IMR-90 (cell line): ENCODE measurements at regions of chr7 and their contacts with region 1.

Region 1: DNA sequence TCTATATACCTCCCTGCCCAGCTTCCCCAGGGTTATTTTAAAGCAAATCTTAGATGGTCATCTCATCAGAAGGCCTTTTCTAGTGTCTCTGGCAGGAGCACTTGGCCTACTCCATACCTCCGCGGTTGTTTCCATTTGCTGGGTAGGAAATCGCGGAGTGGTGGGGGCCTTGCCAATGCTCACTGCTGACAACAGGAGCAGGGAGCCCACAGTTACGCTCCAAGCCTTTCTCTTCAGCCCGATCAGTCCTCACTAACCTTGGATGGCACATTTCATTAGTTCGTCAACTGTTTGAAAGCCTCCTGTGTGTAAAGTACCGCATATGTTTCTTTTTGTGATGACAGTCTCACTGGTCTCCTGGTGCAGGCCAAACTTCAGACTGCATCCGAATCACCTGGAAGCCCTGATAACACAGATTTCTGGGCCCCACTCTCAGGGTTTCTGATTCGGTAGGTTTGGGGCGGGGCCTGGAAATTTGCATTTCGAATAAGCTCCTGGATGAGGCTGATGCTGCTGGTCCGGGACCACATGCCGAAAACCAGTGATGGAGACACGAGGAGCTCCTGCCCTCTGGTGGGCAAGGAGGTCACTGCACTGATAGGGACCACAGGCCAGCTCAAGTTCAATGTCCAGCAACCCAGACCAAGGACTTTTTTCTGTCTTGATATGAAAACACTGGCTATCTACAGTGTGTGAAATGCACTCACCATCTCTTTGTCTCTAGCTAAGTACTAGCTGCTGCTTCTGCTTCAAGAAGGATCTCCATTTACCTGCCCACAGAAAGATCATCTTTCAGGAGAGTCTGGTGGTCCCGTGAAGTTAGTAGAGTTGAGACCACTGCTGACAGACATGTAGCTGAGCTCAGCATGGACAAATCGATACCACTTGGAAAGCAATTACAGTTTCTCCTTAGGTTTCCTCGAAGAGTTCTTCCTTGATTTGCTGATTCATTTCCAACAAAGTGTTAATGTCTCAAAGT is 14.0 kb downstream of the LRGUK start:
- DNase-seq: peak; percentile 51
- ATAC-seq: peak; percentile 100
- H3K4me3 ChIP-seq: no peak overlapping the region
- H3K27ac ChIP-seq: no peak overlapping the region
- H3K4me1 ChIP-seq: no peaks in the 10 kb centered on the region
- H3K27me3 ChIP-seq: no peaks in the 10 kb centered on the region; the same call in 1 of the 2 replicates
- CTCF ChIP-seq: peak; percentile 76
- POLR2A ChIP-seq: no peak
- RAD21 ChIP-seq: peak; percentile 74

Region 2: GRCh38 chr7:133950855-133951254 is 190.3 kb before region 1 on chr7:
- CTCF ChIA-PET with region 1: no interaction called
- POLR2A ChIA-PET with region 1: no interaction called
- dilution Hi-C with region 1: no loop called
- in situ Hi-C with region 1: no loop called
- intact Hi-C with region 1: no loop called
- DNase-seq: no peak
- ATAC-seq: no peak
- H3K4me3 ChIP-seq: no peak overlapping the region
- H3K27ac ChIP-seq: no peak overlapping the region
- H3K4me1 ChIP-seq: no peaks in the 10 kb centered on the region
- H3K27me3 ChIP-seq: no peaks in the 10 kb centered on the region
- CTCF ChIP-seq: no peak
- POLR2A ChIP-seq: no peak
- RAD21 ChIP-seq: no peak

Region 3: GRCh38 chr7:134126966-134127848 is 14.0 kb before region 1 on chr7 and contains the start of gene LRGUK:
- CTCF ChIA-PET with region 1: interaction called, 14 read pairs
- POLR2A ChIA-PET with region 1: no interaction called
- dilution Hi-C with region 1: no loop called
- in situ Hi-C with region 1: no loop called
- intact Hi-C with region 1: no loop called
- DNase-seq: peak; percentile 72
- ATAC-seq: peak; percentile 100
- H3K4me3 ChIP-seq: peak within 1 kb of the TSS; percentile 86
- H3K27ac ChIP-seq: no peak within 1 kb of the TSS
- H3K4me1 ChIP-seq: no peaks in the 10 kb centered on the region
- H3K27me3 ChIP-seq: peaks cover 7% of the 10 kb centered on the region
- CTCF ChIP-seq: no peak
- POLR2A ChIP-seq: no peak
- RAD21 ChIP-seq: no peak
- total RNA-seq, gene LRGUK: under 0.01 TPM in 1 of 2 replicates, not detected in the other

Region 4: GRCh38 chr7:134154581-134155130 is 13.5 kb after region 1 on chr7:
- CTCF ChIA-PET with region 1: interaction called, 20 read pairs
- POLR2A ChIA-PET with region 1: no interaction called
- dilution Hi-C with region 1: no loop called
- in situ Hi-C with region 1: no loop called
- intact Hi-C with region 1: no loop called
- DNase-seq: no peak
- ATAC-seq: no peak
- H3K4me3 ChIP-seq: no peak overlapping the region
- H3K27ac ChIP-seq: no peak overlapping the region
- H3K4me1 ChIP-seq: no peaks in the 10 kb centered on the region
- H3K27me3 ChIP-seq: no peaks in the 10 kb centered on the region
- CTCF ChIP-seq: no peak
- POLR2A ChIP-seq: no peak
- RAD21 ChIP-seq: no peak

Region 5: GRCh38 chr7:134327896-134328295 is 186.7 kb after region 1 on chr7:
- CTCF ChIA-PET with region 1: no interaction called
- POLR2A ChIA-PET with region 1: no interaction called
- dilution Hi-C with region 1: no loop called
- in situ Hi-C with region 1: no loop called
- intact Hi-C with region 1: loop called (anchors 10 kb)
- DNase-seq: peak; percentile 56
- ATAC-seq: peak; percentile 68
- H3K4me3 ChIP-seq: no peak overlapping the region
- H3K27ac ChIP-seq: no peak overlapping the region
- H3K4me1 ChIP-seq: no peaks in the 10 kb centered on the region
- H3K27me3 ChIP-seq: peaks cover 8% of the 10 kb centered on the region
- CTCF ChIP-seq: peak; percentile 56
- POLR2A ChIP-seq: no peak
- RAD21 ChIP-seq: peak; percentile 69

Region 6: DNA sequence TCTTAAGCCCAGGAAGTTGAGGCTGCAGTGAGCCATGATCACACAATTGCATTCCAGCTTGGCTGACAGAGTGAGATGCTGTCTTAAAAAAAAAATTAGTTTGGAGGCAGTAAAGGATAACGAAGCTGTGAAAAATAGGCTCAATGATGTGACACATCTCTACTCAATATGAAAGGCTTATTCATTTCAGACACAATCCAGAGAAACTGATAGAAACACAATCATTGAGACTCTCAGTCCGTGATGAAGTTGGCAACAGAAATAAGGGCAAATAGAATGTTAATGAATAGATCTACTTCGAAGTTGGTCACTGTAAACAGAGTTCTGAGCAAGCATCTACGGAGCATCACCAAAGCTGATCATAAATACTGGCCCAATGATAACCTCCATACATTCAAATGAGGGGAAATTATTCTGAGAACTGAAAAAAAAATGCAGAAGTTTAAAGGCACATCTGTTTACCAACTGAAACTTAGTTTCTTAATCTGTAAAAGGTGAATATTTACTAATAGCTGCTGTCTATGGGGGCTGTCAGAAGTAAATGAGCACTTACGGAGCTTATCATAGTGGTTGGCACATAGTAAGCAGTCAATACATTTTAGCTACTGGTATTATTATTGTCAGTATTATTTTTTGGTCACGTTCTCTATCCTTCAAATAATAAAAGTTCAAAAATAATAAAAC is 247.3 kb after region 1 on chr7:
- CTCF ChIA-PET with region 1: no interaction called
- POLR2A ChIA-PET with region 1: no interaction called
- dilution Hi-C with region 1: no loop called
- in situ Hi-C with region 1: no loop called
- intact Hi-C with region 1: no loop called
- DNase-seq: no peak
- ATAC-seq: no peak
- H3K4me3 ChIP-seq: no peak overlapping the region
- H3K27ac ChIP-seq: no peak overlapping the region
- H3K4me1 ChIP-seq: no peaks in the 10 kb centered on the region
- H3K27me3 ChIP-seq: peaks cover 4% of the 10 kb centered on the region
- CTCF ChIP-seq: no peak
- POLR2A ChIP-seq: no peak
- RAD21 ChIP-seq: no peak

Region 7: DNA sequence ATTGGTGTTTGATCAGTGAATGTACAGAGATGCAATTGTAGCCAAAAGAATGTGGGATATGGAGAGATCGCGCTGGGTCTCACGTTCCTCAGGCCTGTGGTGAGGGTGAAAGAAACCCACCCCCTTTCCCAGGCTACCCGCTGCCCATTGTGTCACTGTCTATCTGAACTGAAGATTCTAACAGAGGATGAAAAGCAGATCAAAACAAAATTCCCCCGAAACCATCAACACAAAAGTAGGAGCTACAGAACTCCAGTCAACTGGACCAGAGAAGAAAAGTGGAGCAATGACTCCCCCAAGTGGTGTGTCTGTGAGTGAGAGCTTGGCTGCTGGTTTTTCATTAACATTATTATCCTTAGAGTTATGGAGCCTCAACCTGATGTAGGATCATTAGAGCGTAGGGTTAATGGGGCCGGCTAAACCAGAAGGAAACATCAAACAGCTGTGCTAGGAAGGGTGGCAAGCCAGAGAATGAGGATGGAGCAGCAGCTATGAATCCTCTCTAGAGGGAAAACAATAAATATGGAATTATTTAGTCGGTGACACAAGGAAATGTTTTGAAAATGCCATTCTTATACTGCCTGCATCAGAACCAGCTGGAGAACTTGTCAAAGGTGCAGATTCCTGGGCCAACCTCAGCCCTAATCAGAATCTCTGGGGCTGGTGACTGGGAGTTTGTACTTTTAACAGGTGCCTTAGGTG is 279.4 kb after region 1 on chr7:
- CTCF ChIA-PET with region 1: no interaction called
- POLR2A ChIA-PET with region 1: no interaction called
- dilution Hi-C with region 1: no loop called
- in situ Hi-C with region 1: no loop called
- intact Hi-C with region 1: loop called (anchors 1 kb)
- DNase-seq: peak; percentile 55
- ATAC-seq: peak; percentile 94
- H3K4me3 ChIP-seq: no peak overlapping the region
- H3K27ac ChIP-seq: no peak overlapping the region
- H3K4me1 ChIP-seq: no peaks in the 10 kb centered on the region
- H3K27me3 ChIP-seq: peaks cover 15% of the 10 kb centered on the region
- CTCF ChIP-seq: peak; percentile 76
- POLR2A ChIP-seq: no peak
- RAD21 ChIP-seq: peak; percentile 77